HCT116 (cell line): ENCODE measurements at regions of chr20 and their contacts with region 1.

Region 1: DNA sequence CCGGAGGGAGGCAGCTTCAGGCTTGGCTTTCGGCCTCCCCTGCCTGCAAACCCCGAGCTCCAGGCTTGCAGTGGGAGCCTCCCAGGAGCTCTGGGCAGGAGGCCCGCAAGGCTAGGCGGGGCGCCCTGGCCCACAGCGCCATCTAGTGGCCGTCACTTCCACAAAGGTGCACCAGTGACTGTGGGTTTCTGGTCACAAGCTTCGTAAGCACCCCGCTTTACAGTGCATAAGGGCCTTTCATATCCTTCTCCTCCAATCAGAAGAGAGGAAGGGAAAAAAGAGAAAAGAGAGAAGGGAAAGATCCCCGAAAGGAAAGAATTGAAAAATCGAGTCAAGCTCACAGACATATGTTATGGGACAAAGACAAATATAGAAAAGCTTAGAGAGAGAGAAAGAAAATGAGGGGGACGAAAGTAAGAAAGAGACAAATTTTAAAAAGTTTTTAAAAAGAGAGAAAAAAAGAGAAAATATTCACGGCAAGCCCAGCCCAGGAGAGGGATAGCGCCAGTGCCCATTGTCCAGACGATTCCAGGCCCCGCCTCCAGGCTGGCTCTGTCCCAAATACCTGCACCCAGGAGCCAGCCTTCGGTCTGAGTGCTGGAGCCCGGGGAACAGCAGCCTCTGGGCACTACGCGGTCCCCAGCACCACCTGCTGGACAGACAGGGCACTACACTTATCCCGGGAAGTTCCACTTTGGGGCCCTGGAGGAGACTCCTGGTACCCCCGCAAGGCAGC is 207.1 kb downstream of the PREX1 start:
- DNase-seq: peak; percentile 72
- ATAC-seq: peak; percentile 91
- H3K4me3 ChIP-seq: peak overlapping the region; percentile 8 to 36; a peak in 3 of 4 replicates
- H3K27ac ChIP-seq: no peak overlapping the region
- H3K4me1 ChIP-seq: peaks cover 5 to 19% of the 10 kb centered on the region in 2 experiments; a peak in 3 of 4 replicates
- H3K27me3 ChIP-seq: no peaks in the 10 kb centered on the region
- CTCF ChIP-seq: peak; percentile 72 to 96 (median 89)
- POLR2A ChIP-seq: no peak
- RAD21 ChIP-seq: peak; percentile 95

Region 2: GRCh38 chr20:46746956-46747526 is 1873.6 kb before region 1 on chr20:
- CTCF ChIA-PET with region 1: no interaction called
- POLR2A ChIA-PET with region 1: no interaction called
- RAD21 ChIA-PET with region 1: no interaction called
- intact Hi-C with region 1: loop called (anchors 5 kb)
- DNase-seq: peak; percentile 28
- ATAC-seq: peak; percentile 71
- H3K4me3 ChIP-seq: peak overlapping the region in 1 of 2 experiments; percentile 17; a peak in 2 of 4 replicates
- H3K27ac ChIP-seq: no peak overlapping the region
- H3K4me1 ChIP-seq: peaks cover 6 to 27% of the 10 kb centered on the region in 2 experiments; a peak in 3 of 4 replicates
- H3K27me3 ChIP-seq: no peaks in the 10 kb centered on the region
- CTCF ChIP-seq: no peak
- POLR2A ChIP-seq: no peak
- RAD21 ChIP-seq: no peak

Region 3: GRCh38 chr20:47663333-47664067 is 957.2 kb before region 1 on chr20:
- CTCF ChIA-PET with region 1: interaction called, 13 read pairs
- POLR2A ChIA-PET with region 1: no interaction called
- RAD21 ChIA-PET with region 1: no interaction called
- intact Hi-C with region 1: loop called (anchors 1 kb)
- DNase-seq: peak; percentile 51
- ATAC-seq: peak; percentile 97
- H3K4me3 ChIP-seq: no peak overlapping the region
- H3K27ac ChIP-seq: no peak overlapping the region
- H3K4me1 ChIP-seq: peaks cover 0 to 2% of the 10 kb centered on the region in 2 experiments; a peak in 1 of 4 replicates
- H3K27me3 ChIP-seq: no peaks in the 10 kb centered on the region
- CTCF ChIP-seq: peak; percentile 65 to 98 (median 97); a peak in 5 of 6 replicates
- POLR2A ChIP-seq: no peak
- RAD21 ChIP-seq: peak; percentile 78

Region 4: DNA sequence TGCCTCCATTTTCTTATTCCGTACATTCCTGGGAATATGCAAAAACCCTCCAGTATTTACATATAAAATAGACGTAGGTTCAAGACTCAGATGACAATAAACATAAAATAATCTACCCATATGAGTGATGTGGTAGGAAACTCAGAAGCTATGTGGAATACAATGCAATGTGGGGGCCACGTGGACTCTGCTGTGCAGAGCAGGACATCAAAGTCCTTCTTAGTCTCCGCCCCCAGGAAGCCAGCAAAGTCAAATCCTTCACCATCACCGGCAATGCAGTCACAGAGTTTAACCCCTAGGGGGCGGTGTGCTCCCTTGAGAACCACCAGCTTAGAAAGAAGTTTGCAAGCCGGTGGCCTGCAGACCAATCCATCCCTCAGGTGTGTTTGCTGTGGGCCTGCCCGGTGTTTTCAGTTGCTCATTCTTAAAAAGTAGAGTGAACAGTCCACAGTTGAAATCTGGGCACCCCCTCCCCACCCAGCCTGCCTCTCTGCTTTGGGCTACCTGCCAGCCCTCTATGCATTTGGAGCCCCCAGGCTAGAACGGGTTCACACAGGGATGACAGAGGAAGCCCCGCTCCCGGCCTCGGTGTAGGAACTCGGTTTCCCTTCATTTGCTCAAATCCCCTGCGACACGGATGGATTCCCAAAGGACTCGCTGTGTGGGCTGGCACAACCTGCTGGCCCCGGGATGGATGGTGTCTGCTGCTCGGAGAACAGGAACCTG is 895.3 kb before region 1 on chr20:
- CTCF ChIA-PET with region 1: interaction called, 15 read pairs
- POLR2A ChIA-PET with region 1: no interaction called
- RAD21 ChIA-PET with region 1: no interaction called
- intact Hi-C with region 1: loop called (anchors 2 kb)
- DNase-seq: peak; percentile 82
- ATAC-seq: peak; percentile 95
- H3K4me3 ChIP-seq: no peak overlapping the region
- H3K27ac ChIP-seq: no peak overlapping the region
- H3K4me1 ChIP-seq: peaks cover 0 to 10% of the 10 kb centered on the region in 2 experiments; a peak in 2 of 4 replicates
- H3K27me3 ChIP-seq: no peaks in the 10 kb centered on the region
- CTCF ChIP-seq: peak; percentile 62 to 96 (median 96)
- POLR2A ChIP-seq: no peak
- RAD21 ChIP-seq: peak; percentile 82

Region 5: GRCh38 chr20:47854163-47854562 is 766.5 kb before region 1 on chr20:
- CTCF ChIA-PET with region 1: interaction called, 4 read pairs
- POLR2A ChIA-PET with region 1: no interaction called
- RAD21 ChIA-PET with region 1: interaction called in 1 of 2 experiments, 5 read pairs
- intact Hi-C with region 1: loop called (anchors 1 kb)
- DNase-seq: no peak
- ATAC-seq: no peak
- H3K4me3 ChIP-seq: no peak overlapping the region
- H3K27ac ChIP-seq: no peak overlapping the region
- H3K4me1 ChIP-seq: peaks cover 0 to 7% of the 10 kb centered on the region in 2 experiments; a peak in 1 of 4 replicates
- H3K27me3 ChIP-seq: no peaks in the 10 kb centered on the region
- CTCF ChIP-seq: no peak
- POLR2A ChIP-seq: no peak
- RAD21 ChIP-seq: no peak

Region 6: DNA sequence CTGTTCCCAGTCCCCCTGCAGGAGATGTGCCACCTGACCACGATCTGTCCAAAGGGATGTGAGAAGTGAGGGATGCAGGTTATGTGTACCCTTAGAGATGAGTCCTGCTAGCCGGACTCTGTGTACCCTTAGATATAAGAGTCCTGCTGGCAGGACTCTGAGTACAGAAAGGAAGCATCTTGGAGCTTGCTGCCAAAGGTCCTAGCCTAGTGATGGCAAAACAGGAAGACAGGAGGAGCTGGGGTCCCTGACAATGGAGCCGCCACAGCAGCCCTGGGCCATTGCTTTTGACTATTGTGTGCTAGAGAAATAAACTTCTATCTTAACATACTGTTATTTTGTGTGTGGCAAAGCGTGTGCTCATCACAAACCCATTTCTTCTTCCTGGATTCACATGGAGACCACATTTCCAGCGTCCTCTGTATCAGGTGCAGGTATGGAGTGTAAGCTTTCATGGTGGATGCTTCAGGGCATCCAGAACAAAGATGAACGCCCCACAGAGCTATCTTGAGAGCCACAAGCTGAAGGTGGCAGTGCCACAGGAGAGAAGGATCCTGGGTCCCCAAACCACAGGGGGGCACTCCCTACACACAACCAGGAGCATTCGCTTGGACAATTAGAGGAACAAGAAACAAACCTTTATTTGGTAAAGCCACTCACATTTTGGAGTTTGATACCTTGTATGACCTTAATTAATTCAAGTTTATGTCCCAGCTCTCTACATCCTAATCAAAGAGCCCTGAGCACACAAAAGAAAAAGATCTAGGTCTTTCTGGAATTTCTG is 199.3 kb before region 1 on chr20:
- CTCF ChIA-PET with region 1: interaction called, 16 read pairs
- POLR2A ChIA-PET with region 1: no interaction called
- RAD21 ChIA-PET with region 1: interaction called, 4 to 6 read pairs
- intact Hi-C with region 1: loop called (anchors 1 kb)
- DNase-seq: no peak
- ATAC-seq: peak; percentile 54
- H3K4me3 ChIP-seq: no peak overlapping the region
- H3K27ac ChIP-seq: no peak overlapping the region
- H3K4me1 ChIP-seq: no peaks in the 10 kb centered on the region
- H3K27me3 ChIP-seq: peaks cover 23% of the 10 kb centered on the region
- CTCF ChIP-seq: peak in 1 of 3 experiments; percentile 37; a peak in 2 of 6 replicates
- POLR2A ChIP-seq: no peak
- RAD21 ChIP-seq: peak; percentile 49

Region 7: DNA sequence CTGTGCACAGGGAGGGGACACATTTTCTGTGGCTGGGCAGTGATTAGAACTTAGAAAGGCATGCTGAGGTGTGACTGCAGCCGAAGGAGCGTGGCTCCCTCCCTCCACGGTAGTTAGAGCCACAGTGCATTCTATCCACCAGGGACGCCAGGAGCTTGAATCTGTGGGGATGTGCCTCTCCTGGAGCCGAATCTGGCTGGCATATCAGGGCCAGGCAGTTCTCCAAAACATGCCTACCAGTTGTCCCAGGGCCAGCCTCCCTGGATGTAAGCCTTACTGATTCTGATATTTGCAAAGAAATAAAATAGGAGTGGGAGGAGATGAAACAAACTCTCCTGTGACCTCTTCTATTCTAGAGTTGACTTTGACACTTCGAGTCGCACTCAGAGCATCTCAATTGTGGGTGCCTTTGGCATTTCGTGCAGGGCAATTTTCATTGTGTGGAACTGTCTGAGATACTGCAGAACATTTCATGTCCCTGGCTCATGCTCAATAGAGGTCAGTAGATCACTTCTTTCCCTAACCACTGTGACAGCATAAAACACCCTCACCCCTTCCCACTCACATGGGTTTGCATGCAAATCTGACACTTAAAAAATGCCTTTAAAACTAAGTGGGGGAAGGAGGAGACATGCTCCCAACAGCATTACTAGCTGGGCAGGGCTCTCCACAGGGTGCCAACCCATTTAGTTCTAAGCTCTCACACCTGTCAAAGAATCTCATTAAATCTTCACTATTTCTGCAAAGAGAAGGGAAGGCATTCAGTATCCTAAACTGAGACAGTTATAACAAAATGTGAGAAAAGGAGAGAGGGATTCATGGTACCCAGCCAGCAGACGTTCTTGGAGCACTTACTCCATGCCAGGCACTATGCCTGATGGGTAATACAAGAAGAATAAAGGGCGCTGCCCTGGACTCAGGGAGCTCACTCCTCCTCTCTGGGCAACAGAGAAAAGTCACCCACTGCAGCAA is 171.8 kb before region 1 on chr20:
- CTCF ChIA-PET with region 1: no interaction called
- POLR2A ChIA-PET with region 1: no interaction called
- RAD21 ChIA-PET with region 1: no interaction called
- intact Hi-C with region 1: no loop called
- DNase-seq: no peak
- ATAC-seq: 0 out of 2 replicates have a peak, but pooled peaks have one; percentile 46
- H3K4me3 ChIP-seq: no peak overlapping the region
- H3K27ac ChIP-seq: no peak overlapping the region
- H3K4me1 ChIP-seq: no peaks in the 10 kb centered on the region
- H3K27me3 ChIP-seq: peaks cover 7% of the 10 kb centered on the region
- CTCF ChIP-seq: peak in 1 of 3 experiments; percentile 25; a peak in 1 of 6 replicates
- POLR2A ChIP-seq: no peak
- RAD21 ChIP-seq: no peak

Region 8: DNA sequence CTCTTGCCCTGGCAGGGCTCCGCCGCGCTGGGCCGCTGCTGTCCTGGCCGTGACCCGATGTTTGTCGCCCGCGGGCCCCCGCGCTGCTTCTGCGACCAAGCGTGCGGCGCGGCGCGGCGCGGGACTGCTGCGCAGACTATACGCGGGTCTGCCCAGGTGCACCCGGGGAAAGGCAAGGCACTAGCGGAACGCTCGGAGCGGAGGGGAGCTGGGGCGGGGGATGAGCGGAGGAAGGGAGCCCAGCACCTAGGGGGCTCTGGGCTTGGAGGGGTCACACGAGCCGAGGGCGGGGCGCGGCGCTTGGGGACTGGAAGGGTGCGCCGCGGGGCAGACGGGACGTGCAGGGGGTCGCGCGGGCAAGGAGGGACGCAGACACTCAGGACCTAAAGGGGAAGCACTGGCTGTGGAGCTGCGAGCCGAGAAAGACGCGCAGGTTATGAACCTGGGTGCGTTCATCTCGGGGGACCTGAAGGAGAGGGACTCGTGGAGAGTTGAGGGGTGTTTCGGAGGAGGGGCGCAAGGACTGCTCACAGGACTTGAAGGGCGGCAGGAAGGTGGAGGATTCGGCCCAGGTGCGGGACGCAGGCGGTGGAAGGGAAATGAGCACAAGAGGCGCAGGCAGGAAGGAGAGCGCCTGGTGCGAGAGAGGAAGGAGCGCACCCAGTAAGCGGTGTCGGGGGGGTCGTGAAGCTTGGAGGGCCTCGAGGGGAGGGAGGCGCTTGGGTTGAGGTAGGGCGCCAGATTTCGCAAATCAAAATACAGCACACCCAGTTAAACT is 697.9 kb after region 1 on chr20:
- CTCF ChIA-PET with region 1: no interaction called
- POLR2A ChIA-PET with region 1: no interaction called
- RAD21 ChIA-PET with region 1: no interaction called
- intact Hi-C with region 1: no loop called
- DNase-seq: no peak
- ATAC-seq: no peak
- H3K4me3 ChIP-seq: no peak overlapping the region
- H3K27ac ChIP-seq: no peak overlapping the region
- H3K4me1 ChIP-seq: peaks cover 0 to 2% of the 10 kb centered on the region in 2 experiments; a peak in 3 of 4 replicates
- H3K27me3 ChIP-seq: peaks cover 7% of the 10 kb centered on the region; the same call in 1 of the 2 replicates
- CTCF ChIP-seq: no peak
- POLR2A ChIP-seq: no peak
- RAD21 ChIP-seq: no peak